ENCODE measurements at regions of chr12 and their contacts with region 1.

Region 1: DNA sequence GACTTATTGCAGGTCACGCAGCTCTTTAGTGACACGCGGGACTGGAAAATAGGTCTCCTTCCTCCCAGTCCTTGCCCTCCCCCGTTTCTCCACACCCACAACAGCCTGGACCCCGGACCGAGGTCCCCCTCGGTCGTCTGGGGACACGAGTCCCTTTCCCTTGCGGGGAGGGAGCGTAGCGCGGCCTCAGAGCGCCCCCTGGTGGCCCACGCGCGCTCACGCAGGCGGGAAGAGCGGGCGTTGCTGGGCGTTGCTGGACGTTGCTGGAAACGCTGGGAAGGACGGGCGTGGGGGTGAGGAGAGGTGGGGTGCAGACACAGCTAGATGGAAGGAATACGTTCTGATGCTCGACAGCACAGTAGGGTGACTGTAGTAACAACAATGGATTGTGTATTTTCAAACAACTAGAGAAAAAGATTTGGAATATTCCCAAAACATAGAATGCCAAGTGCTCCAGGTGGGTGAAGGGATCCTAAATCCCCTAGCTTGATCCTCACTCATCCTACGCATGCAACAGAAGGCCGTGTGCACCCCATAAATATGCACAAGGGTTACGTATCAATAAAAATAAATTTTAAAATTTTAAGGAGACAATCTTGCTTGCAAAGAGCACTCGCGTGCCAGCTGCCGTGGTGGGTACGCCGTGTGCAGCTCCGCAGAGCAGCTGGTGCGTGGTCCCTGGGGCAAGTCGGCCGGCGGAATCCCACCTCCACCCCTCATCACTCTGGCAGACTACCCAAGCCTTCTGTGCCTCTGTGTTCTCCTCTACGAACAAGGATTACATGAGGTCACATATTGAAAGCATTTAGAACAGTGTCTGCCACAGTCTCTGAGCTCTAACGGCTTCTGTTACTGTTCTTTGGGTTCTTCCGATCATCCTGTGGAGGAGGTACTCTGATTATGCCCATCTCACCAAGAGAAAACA is 87.4 kb downstream of the B4GALNT3 start:
- DNase-seq: peak in 9 of 10 donors; percentile 52 to 96 (median 71)

Region 2: GRCh38 chr12:442235-442884 is 104.8 kb before region 1 on chr12:
- intact Hi-C with region 1: loop called (anchors 1 kb)
- DNase-seq: peak in 5 of 10 donors; percentile 57 to 88 (median 72)

Region 3: DNA sequence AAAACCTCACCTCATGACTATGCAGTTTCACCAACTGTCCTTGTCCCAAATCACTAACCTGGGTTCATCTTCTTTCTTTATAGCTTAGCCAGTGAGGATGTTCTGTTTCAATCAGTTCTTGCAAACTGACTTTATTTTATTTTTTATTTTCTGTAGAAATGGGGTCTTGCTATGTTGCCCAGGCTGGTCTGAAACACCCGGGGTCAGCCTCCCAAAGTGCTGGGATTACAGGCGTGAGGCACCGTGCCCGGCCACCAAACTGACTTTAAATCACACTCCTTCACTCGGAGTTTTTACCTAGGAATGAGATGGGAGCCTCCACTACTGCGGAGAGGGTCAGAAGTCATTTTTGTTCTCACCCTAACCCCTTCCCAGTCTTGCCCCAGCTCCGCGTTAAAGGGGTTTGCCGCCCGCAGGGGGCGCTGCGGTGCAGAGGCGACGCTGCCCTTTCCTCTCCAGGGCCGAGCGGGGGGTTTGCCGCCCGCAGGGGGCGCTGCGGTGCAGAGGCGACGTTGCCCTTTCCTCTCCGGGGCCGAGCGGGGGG is 94.4 kb before region 1 on chr12:
- intact Hi-C with region 1: loop called (anchors 2 kb)
- DNase-seq: peak in 3 of 10 donors; percentile 34 to 86 (median 35)